ENCODE measurements at regions of chr11 and their contacts with region 1.

Region 1: GRCh38 chr11:117426269-117426685 is 98.6 kb downstream of the CEP164 start:
- DNase-seq: peak; percentile 96
- ATAC-seq: peak; percentile 79
- H3K4me3 Mint-ChIP-seq: peak overlapping the region; percentile 16; the same call in 1 of the 2 replicates
- H3K27ac Mint-ChIP-seq: no peak overlapping the region
- H3K4me1 Mint-ChIP-seq: peaks cover 20% of the 10 kb centered on the region
- H3K27me3 Mint-ChIP-seq: peaks cover 3% of the 10 kb centered on the region; the same call in 1 of the 2 replicates
- CTCF ChIP-seq: peak; percentile 95

Region 2: DNA sequence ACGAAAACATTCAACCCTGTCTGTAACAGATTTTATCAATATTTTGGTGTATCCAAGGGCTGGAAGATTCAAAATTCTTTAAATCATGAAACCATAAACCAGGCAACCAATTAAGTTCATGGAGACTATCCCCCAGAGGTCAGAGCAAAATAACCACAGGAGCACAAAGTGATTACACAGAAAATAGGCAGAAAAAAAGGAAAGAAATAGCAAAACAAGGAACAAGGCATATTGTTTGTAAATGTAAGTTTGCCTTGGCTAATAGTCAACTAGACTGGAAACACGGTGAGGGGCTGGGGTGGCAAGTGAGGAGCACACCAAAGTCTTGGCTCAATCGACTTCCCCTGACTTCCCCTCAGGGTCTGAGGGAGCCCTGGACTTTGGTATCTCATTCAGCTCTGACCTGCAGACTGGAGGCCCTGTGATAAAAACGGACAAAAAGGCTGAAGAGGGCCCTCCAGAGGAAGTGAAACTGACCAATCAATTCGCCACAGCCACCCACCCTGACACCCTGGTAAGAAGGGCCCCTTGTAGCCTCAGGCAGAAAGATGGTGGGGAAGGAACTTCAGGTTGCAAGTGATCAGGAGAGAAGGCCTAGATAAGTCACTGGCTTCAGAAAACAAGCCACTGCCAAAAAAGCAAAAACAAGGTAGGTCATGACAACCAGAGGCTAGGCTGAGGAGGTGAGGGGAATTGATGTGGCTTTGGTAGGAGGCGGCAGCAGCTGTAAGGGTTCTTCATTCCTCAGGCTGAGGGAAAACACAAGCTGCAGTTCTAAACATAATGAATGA is 329.9 kb before region 1 on chr11:
- CTCF ChIA-PET with region 1: no interaction called
- POLR2A ChIA-PET with region 1: no interaction called
- DNase-seq: peak; percentile 32
- ATAC-seq: peak; percentile 43
- H3K4me3 Mint-ChIP-seq: peak overlapping the region; percentile 92
- H3K27ac Mint-ChIP-seq: peak overlapping the region; percentile 87
- H3K4me1 Mint-ChIP-seq: peaks cover 40% of the 10 kb centered on the region
- H3K27me3 Mint-ChIP-seq: no peaks in the 10 kb centered on the region
- CTCF ChIP-seq: no peak

Region 3: GRCh38 chr11:117189191-117189930 is 236.9 kb before region 1 on chr11:
- CTCF ChIA-PET with region 1: no interaction called
- POLR2A ChIA-PET with region 1: no interaction called
- DNase-seq: no peak
- ATAC-seq: no peak
- H3K4me3 Mint-ChIP-seq: no peak overlapping the region
- H3K27ac Mint-ChIP-seq: no peak overlapping the region
- H3K4me1 Mint-ChIP-seq: no peaks in the 10 kb centered on the region
- H3K27me3 Mint-ChIP-seq: no peaks in the 10 kb centered on the region
- CTCF ChIP-seq: no peak

Region 4: GRCh38 chr11:117410861-117411710 is 15.2 kb before region 1 on chr11:
- CTCF ChIA-PET with region 1: interaction called, 103 read pairs
- POLR2A ChIA-PET with region 1: no interaction called
- DNase-seq: no peak
- ATAC-seq: peak; percentile 55; the same call in 1 of the 2 replicates
- H3K4me3 Mint-ChIP-seq: no peak overlapping the region
- H3K27ac Mint-ChIP-seq: no peak overlapping the region
- H3K4me1 Mint-ChIP-seq: peaks cover 17% of the 10 kb centered on the region
- H3K27me3 Mint-ChIP-seq: 0 out of 2 replicates have a peak, but pooled peaks cover 2% of the 10 kb centered on the region
- CTCF ChIP-seq: no peak

Region 5: GRCh38 chr11:117468888-117469287 is 42.6 kb after region 1 on chr11:
- CTCF ChIA-PET with region 1: interaction called, 51 read pairs
- POLR2A ChIA-PET with region 1: no interaction called
- DNase-seq: peak; percentile 33
- ATAC-seq: peak; percentile 79
- H3K4me3 Mint-ChIP-seq: no peak overlapping the region
- H3K27ac Mint-ChIP-seq: no peak overlapping the region
- H3K4me1 Mint-ChIP-seq: peaks cover 20% of the 10 kb centered on the region
- H3K27me3 Mint-ChIP-seq: no peaks in the 10 kb centered on the region; the same call in 1 of the 2 replicates
- CTCF ChIP-seq: no peak

Region 6: DNA sequence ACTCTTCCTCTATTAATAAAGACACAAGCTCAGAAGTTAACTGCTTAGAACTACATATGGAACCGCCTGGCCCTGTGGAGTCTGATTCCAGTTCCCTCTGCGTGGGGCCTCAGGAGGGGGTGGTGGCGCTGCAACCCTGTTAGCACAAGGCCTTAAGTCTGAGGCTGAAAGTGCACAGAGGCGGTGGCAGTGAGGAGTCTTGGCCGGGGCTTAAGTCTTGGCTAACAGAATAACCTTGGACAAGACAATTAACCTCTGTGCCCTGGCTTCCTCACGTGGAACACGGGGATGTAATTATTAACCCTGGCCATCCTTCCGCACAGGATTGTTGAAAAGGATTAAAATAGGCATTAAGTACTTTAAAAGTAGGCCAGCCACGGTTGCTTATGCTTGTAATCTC is 92.9 kb after region 1 on chr11:
- CTCF ChIA-PET with region 1: interaction called, 13 read pairs
- POLR2A ChIA-PET with region 1: no interaction called
- DNase-seq: no peak
- ATAC-seq: no peak; the same call in 1 of the 2 replicates
- H3K4me3 Mint-ChIP-seq: no peak overlapping the region
- H3K27ac Mint-ChIP-seq: no peak overlapping the region
- H3K4me1 Mint-ChIP-seq: peaks cover 10% of the 10 kb centered on the region
- H3K27me3 Mint-ChIP-seq: no peaks in the 10 kb centered on the region
- CTCF ChIP-seq: no peak

Region 7: GRCh38 chr11:117597071-117597470 is 170.8 kb after region 1 on chr11:
- CTCF ChIA-PET with region 1: interaction called, 13 read pairs
- POLR2A ChIA-PET with region 1: no interaction called
- DNase-seq: peak; percentile 84
- ATAC-seq: peak; percentile 33; the same call in 1 of the 2 replicates
- H3K4me3 Mint-ChIP-seq: no peak overlapping the region
- H3K27ac Mint-ChIP-seq: no peak overlapping the region
- H3K4me1 Mint-ChIP-seq: peaks cover 29% of the 10 kb centered on the region
- H3K27me3 Mint-ChIP-seq: no peaks in the 10 kb centered on the region
- CTCF ChIP-seq: no peak

Region 8: GRCh38 chr11:117796872-117797529 is 370.7 kb after region 1 on chr11 and contains the start of gene DSCAML1:
- CTCF ChIA-PET with region 1: interaction called, 10 read pairs
- POLR2A ChIA-PET with region 1: no interaction called
- DNase-seq: peak; percentile 66
- ATAC-seq: peak; percentile 74
- H3K4me3 Mint-ChIP-seq: peak within 1 kb of the TSS; percentile 74
- H3K27ac Mint-ChIP-seq: no peak within 1 kb of the TSS
- H3K4me1 Mint-ChIP-seq: peaks cover 15% of the 10 kb centered on the region
- H3K27me3 Mint-ChIP-seq: peaks cover 73% of the 10 kb centered on the region
- CTCF ChIP-seq: no peak
- total RNA-seq, gene DSCAML1: 0.25 to 0.90 TPM (median 0.82 TPM) in 3 replicates

Measured in WTC11 (cell line).